CD4-positive, alpha-beta T cell (primary cell): ENCODE measurements at regions of chr6 and their contacts with region 1.

Region 1: DNA sequence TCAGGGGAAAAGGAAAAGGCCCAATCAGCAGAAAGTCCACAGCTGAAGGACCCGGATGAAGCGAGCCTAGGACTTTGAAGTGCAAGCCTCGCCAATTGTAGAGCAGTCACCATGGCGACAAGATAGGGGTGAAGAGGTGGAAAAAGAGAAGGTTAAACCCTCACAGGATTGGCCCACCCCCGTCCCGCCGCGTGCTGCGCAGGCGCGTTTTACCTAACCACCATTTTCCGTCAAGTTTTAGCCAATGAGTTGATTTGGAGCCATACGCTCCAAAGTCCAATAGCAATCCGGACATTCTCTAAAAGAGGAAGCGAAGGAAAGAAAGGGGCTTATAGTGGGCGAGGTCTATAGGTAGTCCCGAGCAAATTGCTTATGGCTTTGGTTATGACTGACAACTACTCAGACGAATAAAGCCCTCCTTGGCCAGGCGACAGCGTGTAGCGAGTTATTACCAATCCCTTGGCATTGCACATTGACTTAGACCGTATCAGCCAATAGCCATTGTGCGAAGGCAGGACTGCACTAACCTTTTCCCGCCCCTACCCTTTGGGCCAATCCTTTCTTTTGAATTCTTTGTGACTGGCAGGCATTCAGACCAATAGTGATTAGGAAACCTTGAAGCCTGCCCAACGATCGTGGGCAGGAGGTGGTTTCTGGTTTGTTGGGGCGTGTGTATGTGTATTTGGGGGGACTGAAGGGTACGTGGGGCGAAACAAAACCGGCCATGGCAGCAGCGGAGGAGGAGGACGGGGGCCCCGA is at the start of gene RNF5:
- DNase-seq: peak; percentile 83 to 99 (median 92)
- ATAC-seq: peak; percentile 81
- H3K4me3 ChIP-seq: peak within 1 kb of the TSS; percentile 91
- H3K4me3 Mint-ChIP-seq: peak within 1 kb of the TSS; percentile 91
- H3K27ac ChIP-seq: peak within 1 kb of the TSS; percentile 93 to 98
- H3K27ac Mint-ChIP-seq: peak within 1 kb of the TSS; percentile 85
- H3K4me1 ChIP-seq: peaks cover 79% of the 10 kb centered on the region
- H3K4me1 Mint-ChIP-seq: peaks cover 65% of the 10 kb centered on the region
- H3K27me3 ChIP-seq: no peaks in the 10 kb centered on the region
- H3K27me3 Mint-ChIP-seq: no peaks in the 10 kb centered on the region
- CTCF ChIP-seq: no peak
- total RNA-seq, gene RNF5: 9.6 to 9.9 TPM

Region 2: GRCh38 chr6:31958741-31959739 is 218.9 kb before region 1 on chr6 and contains the starts of genes NELFE and SKIC2:
- CTCF ChIA-PET with region 1: no interaction called
- POLR2A ChIA-PET with region 1: no interaction called
- intact Hi-C with region 1: loop called in 1 of 2 experiments (anchors 5 kb)
- DNase-seq: peak; percentile 96 to 100 (median 98)
- ATAC-seq: peak; percentile 97
- H3K4me3 ChIP-seq: peak within 1 kb of the TSS; percentile 97
- H3K4me3 Mint-ChIP-seq: peak within 1 kb of the TSS; percentile 96
- H3K27ac ChIP-seq: peak within 1 kb of the TSS; percentile 94 to 96
- H3K27ac Mint-ChIP-seq: peak within 1 kb of the TSS; percentile 97
- H3K4me1 ChIP-seq: peaks cover 30% of the 10 kb centered on the region
- H3K4me1 Mint-ChIP-seq: peaks cover 38% of the 10 kb centered on the region
- H3K27me3 ChIP-seq: no peaks in the 10 kb centered on the region
- H3K27me3 Mint-ChIP-seq: no peaks in the 10 kb centered on the region
- CTCF ChIP-seq: no peak
- total RNA-seq, gene NELFE: 53.8 to 58.2 TPM
- total RNA-seq, gene SKIC2: 133 to 141 TPM

Region 3: DNA sequence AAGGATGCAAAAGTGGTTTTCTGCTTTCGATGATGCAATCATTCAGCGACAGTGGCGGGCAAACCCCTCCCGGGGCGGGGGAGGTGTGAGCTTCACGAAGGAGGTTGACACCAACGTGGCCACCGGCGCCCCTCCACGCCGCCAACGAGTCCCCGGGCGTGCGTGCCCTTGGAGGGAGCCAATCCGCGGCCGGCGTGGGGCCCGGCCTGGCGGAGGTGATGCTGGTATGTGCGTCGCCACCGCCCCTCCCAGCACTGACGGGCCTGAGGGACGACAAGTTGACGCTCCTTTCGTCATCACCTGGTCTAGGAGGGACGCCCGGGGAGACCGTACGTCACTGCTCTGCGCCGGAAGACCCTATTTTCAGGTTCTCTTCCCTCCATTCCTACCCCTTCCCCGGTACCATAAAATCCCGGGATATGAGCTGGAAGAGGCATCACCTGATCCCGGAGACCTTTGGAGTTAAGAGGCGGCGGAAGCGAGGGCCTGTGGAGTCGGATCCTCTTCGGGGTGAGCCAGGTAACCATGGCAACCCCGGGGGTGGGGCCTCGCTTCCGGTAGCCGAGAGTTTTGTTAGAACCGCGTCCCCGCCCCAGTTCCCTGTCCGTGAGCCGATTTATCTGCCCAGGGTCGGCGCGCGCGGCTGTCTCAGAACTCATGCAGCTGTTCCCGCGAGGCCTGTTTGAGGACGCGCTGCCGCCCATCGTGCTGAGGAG is 205.8 kb before region 1 on chr6 and contains the start of gene DXO:
- CTCF ChIA-PET with region 1: no interaction called
- POLR2A ChIA-PET with region 1: no interaction called
- intact Hi-C with region 1: loop called in 1 of 2 experiments (anchors 10 kb)
- DNase-seq: peak; percentile 87 to 99 (median 95)
- ATAC-seq: peak; percentile 91
- H3K4me3 ChIP-seq: peak within 1 kb of the TSS; percentile 84
- H3K4me3 Mint-ChIP-seq: peak within 1 kb of the TSS; percentile 100
- H3K27ac ChIP-seq: peak within 1 kb of the TSS; percentile 99 to 100
- H3K27ac Mint-ChIP-seq: peak within 1 kb of the TSS; percentile 100
- H3K4me1 ChIP-seq: peaks cover 32% of the 10 kb centered on the region
- H3K4me1 Mint-ChIP-seq: peaks cover 34% of the 10 kb centered on the region
- H3K27me3 ChIP-seq: no peaks in the 10 kb centered on the region
- H3K27me3 Mint-ChIP-seq: peaks cover 6% of the 10 kb centered on the region
- CTCF ChIP-seq: no peak
- total RNA-seq, gene DXO: 30.0 to 31.1 TPM

Region 4: DNA sequence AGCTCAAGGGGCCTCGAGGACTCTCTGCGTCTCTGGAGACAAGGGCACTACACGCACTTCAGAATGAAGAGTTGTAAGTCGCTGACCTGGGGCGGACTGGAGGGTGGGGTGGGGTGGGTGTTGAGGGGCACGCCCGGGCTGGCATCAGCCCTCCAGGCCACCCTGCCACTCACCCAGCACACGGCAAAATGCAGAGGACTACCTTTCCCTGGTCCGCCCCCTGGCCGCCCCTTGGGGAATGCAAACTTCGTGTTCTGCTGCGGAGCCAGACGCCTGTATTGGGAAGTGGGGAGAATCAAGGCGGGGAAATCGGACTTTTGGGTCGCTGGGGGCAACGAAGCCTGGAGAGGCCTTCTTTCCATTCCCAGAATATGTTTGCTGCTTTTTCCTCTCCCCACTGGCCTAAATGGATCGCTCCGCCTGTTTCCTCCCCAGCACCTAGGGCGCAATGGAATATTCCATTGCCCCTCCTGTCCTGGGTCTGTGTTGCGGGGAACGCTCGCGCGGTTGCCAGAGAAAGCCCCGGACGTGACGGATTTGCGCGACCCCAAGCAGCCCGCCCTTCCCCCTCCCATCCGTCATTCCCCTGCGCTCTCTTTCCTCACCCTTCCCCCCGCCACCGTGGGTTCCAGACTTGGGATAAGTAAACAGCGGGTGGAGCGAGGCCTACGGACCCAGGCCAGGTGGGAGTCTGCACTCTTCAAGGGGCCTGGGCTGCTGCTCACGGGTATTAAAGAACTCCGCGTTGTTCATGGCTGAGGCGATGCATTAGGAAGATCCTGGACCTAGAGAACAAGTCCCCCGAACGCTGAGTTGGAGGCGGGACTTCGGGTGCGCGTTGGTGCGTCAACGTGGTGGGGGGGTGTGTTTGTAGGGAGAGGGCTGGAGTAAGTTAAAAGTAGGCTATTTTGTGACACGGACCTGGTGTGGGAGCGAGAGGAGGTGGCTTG is 24.1 kb before region 1 on chr6 and contains the start of gene PPT2:
- CTCF ChIA-PET with region 1: no interaction called
- POLR2A ChIA-PET with region 1: interaction called, 3 read pairs
- intact Hi-C with region 1: loop called in 1 of 2 experiments (anchors 1 kb)
- DNase-seq: peak; percentile 38 to 88 (median 64)
- ATAC-seq: peak; percentile 67
- H3K4me3 ChIP-seq: peak within 1 kb of the TSS; percentile 80
- H3K4me3 Mint-ChIP-seq: peak within 1 kb of the TSS; percentile 96
- H3K27ac ChIP-seq: peak within 1 kb of the TSS; percentile 51 to 67
- H3K27ac Mint-ChIP-seq: peak within 1 kb of the TSS; percentile 88
- H3K4me1 ChIP-seq: peaks cover 57% of the 10 kb centered on the region
- H3K4me1 Mint-ChIP-seq: peaks cover 65% of the 10 kb centered on the region
- H3K27me3 ChIP-seq: peaks cover 4 to 14% of the 10 kb centered on the region in 2 experiments
- H3K27me3 Mint-ChIP-seq: peaks cover 22% of the 10 kb centered on the region
- CTCF ChIP-seq: no peak
- total RNA-seq, gene PPT2: 8.7 to 8.9 TPM

Region 5: DNA sequence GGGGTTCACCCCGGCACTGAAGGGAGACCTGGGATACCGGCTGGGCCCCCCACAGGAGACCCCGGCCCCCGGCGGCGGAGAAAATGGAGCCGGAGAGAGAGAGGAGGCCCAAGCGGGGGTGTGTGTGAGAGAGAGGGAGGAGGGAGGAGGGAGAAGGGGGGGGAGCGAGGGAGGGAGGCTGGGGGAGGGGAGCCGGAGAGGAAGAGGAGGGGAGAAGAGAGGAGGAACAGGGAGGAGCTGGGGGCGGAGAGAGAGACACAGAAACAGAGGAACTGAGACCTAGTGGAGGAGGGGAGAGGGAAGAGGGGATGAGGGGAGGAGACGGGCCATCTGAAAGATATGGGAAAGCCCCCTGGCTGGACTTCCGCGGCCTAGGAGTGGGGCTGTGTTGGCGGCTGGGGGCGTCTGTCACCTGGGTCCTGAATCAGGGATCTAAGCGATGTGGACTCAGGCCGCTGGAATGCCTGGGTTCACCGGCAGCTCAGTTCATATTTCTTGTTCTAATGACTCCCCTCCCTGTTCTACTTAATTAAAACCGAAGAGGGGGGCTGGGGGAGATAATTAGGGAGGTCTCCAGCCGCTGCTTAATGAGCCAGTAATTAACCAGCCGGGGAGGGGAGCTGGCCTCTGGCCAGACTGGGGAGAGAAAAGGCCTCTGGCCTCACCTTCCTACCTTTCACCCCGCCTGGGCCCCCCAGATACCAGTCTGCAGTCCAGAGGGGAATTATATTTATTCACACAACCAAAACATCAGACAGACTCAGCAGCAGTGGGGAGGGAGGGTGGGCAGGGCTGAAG is 12.3 kb after region 1 on chr6 and contains the start of gene PBX2:
- CTCF ChIA-PET with region 1: interaction called, 14 read pairs
- POLR2A ChIA-PET with region 1: interaction called, 242 read pairs
- intact Hi-C with region 1: loop called (anchors 1 kb)
- DNase-seq: peak; percentile 65 to 96 (median 86)
- ATAC-seq: peak; percentile 51
- H3K4me3 ChIP-seq: peak within 1 kb of the TSS; percentile 96
- H3K4me3 Mint-ChIP-seq: peak within 1 kb of the TSS; percentile 99
- H3K27ac ChIP-seq: peak within 1 kb of the TSS; percentile 93
- H3K27ac Mint-ChIP-seq: peak within 1 kb of the TSS; percentile 96
- H3K4me1 ChIP-seq: peaks cover 74% of the 10 kb centered on the region
- H3K4me1 Mint-ChIP-seq: peaks cover 71% of the 10 kb centered on the region
- H3K27me3 ChIP-seq: no peaks in the 10 kb centered on the region
- H3K27me3 Mint-ChIP-seq: no peaks in the 10 kb centered on the region
- CTCF ChIP-seq: no peak
- total RNA-seq, gene PBX2: 62.0 to 65.6 TPM

Region 6: DNA sequence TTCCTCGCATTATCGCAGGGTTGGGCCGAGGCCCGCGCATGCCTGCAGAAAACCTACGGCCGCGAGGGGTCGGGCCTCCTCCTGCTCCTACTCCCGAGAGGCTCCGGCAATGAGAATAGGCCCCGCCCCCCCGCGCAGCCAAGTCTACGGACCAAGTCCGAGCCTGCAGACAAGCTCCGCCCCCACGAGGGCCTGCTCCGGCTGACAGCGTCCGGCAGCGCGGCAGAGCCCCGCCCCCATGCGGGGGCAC is 17.6 kb after region 1 on chr6:
- CTCF ChIA-PET with region 1: interaction called, 14 read pairs
- POLR2A ChIA-PET with region 1: interaction called, 242 read pairs
- intact Hi-C with region 1: loop called (anchors 1 kb)
- DNase-seq: peak in 13 of 14 experiments; percentile 97 to 100 (median 100)
- ATAC-seq: peak; percentile 82
- H3K4me3 ChIP-seq: peak overlapping the region; percentile 100
- H3K4me3 Mint-ChIP-seq: peak overlapping the region; percentile 99
- H3K27ac ChIP-seq: peak overlapping the region; percentile 87 to 100
- H3K27ac Mint-ChIP-seq: peak overlapping the region; percentile 96
- H3K4me1 ChIP-seq: peaks cover 52% of the 10 kb centered on the region
- H3K4me1 Mint-ChIP-seq: peaks cover 48% of the 10 kb centered on the region
- H3K27me3 ChIP-seq: no peaks in the 10 kb centered on the region
- H3K27me3 Mint-ChIP-seq: no peaks in the 10 kb centered on the region
- CTCF ChIP-seq: peak; percentile 31